ENCODE measurements at regions of chr7 and their contacts with region 1.

Region 1: DNA sequence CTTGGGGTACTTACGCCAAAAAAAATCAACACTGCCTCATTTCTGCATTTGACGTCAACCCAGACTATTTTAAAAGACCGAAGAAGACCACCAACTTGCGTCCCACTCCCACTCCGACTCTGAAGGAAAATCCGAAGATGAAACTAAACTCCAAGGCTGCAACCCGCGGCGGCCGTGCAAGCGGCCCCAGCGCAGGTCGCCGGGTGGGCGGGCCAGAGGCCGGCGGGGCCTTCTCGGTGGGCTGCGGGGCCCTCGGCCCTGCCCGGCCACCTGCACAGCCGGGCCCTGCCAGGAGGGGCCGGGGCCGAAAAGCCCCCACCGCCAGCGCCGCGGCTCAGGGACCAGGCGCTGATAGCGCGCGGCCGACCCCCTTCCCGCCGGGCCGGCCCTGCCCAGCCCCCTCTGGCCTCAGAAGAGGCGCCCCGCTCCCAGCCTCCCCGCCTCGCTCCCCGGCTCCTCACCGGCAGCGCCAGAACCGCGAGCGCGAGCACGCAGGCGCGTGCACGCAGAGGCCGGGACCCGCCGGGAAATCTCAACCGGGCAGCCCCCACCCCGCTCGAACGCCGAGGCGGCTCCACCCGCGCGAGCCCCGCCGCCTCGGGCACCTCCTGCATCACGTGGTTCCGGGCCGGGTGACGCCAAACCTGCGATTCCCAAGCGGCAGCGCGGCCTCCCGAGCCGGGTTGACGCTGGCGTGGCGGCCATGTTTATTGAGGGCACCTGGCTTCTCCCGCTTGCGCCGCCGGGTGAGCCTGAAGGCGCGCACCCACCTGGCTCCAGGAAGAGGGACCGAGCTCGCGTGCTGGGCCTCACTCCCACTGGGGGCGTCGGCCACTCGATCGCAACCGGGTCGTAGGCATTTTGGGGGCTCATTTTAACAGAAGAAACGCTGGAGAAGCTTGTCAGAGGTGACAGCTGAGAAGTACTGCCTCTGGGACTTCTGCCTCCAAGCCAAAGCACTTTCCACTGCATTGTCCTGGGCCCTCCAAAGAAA is at the start of gene C7orf25:
- DNase-seq: peak; percentile 98
- H3K4me3 ChIP-seq: peak within 1 kb of the TSS; percentile 55 to 97 (median 90)
- H3K27ac ChIP-seq: peak within 1 kb of the TSS; percentile 78 to 89 (median 86)
- H3K4me1 ChIP-seq: peaks cover 0 to 22% (median 14%) of the 10 kb centered on the region in 4 donors
- H3K27me3 ChIP-seq: no peaks in the 10 kb centered on the region
- CTCF ChIP-seq: no peak
- EP300 ChIP-seq: no peak
- POLR2A ChIP-seq: no peak
- total RNA-seq, gene C7orf25: 5.4 to 13.0 (median 8.9) TPM

Region 2: DNA sequence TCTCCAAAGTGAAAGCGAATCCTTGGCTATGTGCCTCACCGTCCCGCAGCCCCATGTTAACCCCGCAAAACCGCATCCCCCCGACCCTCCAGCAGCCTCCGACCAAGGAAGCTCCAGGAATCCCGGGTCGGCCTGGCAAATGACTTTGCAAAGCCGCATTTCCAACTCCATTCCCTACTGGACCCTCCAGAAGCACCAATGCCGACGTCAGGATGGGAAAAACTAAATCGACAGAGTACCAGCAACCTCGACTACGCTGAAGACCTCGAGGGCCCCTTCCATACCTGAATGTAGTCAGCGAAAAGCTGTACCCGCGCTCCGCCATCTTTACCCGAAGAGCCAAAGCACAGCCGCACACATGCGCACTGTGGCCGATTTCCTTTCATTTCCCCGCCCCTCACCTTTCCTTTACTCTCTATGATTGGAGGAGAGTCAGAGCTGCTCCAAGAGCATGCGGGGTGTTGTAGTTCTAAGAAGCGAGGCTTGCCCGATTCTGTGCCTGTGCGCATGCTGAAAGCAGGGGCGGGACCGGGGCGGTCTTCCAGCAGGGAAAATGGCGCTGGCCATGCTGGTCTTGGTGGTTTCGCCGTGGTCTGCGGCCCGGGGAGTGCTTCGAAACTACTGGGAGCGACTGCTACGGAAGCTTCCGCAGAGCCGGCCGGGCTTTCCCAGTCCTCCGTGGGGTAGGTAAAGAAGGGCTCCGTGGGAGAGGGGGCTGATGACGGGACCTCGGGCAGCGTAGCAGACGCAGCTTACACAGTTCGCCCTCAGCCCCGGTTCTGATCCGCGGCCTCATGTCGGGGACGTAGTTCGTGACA is 20.3 kb after region 1 on chr7 and contains the starts of genes MRPL32 and PSMA2:
- intact Hi-C with region 1: loop called (anchors 1 kb)
- DNase-seq: peak; percentile 98
- H3K4me3 ChIP-seq: peak within 1 kb of the TSS; percentile 88 to 95 (median 91)
- H3K27ac ChIP-seq: peak within 1 kb of the TSS; percentile 80 to 93 (median 85)
- H3K4me1 ChIP-seq: peaks cover 0 to 59% (median 40%) of the 10 kb centered on the region in 4 donors
- H3K27me3 ChIP-seq: no peaks in the 10 kb centered on the region
- CTCF ChIP-seq: no peak
- EP300 ChIP-seq: no peak
- POLR2A ChIP-seq: peak; percentile 20 to 54
- total RNA-seq, gene MRPL32: 53.2 to 85.7 (median 68.4) TPM
- total RNA-seq, gene PSMA2: 39.1 to 81.3 (median 68.0) TPM

Region 3: GRCh38 chr7:43033369-43033768 is 121.6 kb after region 1 on chr7:
- intact Hi-C with region 1: no loop called
- DNase-seq: no peak
- H3K4me3 ChIP-seq: no peak overlapping the region
- H3K27ac ChIP-seq: no peak overlapping the region
- H3K4me1 ChIP-seq: no peaks in the 10 kb centered on the region
- H3K27me3 ChIP-seq: no peaks in the 10 kb centered on the region
- CTCF ChIP-seq: no peak
- EP300 ChIP-seq: no peak
- POLR2A ChIP-seq: no peak